Dendritic cell treated with granulocyte-macrophage colony-stimulating factor and Interleukin-4, amounts not matched to agents 40 ng/mL and 50 ng/mL, for 4 days (primary cell): ENCODE measurements at regions of chr10 and their contacts with region 1.

Region 1: DNA sequence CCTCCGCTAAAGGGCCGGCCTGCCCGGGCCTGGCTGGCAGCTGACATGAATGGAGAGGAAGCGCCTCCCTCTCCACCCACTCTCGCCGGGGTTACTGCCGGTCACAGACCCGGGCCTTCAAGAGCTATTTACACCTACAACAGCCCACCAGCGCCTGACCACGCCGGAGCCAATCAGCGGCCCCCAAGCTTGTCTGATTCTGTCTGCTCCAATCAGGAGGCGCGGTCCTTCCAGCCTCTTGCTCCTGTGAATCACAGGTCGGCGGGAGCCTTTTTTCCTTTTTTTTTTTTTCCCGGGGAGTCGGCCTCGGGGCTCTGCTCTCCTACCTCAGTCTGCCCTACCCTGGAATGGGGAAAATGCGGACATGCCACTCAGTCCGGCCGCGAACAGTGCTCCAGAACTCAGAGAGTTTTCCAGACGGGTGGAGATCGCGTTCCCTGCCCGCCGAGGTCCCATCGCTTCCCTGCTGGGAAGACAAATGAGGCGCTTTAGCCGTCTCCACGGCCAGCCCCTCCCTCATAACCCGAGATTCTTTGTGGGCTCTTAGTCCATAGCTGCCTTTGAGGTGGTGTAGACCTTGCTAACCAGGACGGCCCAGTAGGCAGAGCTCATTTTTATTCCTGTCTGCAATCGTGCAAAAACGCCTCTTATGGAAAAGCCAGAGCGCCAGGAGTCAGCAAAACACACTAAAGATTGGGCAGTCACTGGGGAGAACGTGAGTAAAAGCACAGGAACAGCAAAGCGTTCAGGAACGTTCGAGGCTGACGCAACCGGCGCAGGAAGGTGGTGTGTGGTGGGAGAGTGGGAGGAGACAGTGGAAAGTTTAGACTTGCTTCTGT is 26.5 kb downstream of the SCD start:
- H3K4me3 Mint-ChIP-seq: no peak overlapping the region
- H3K27ac Mint-ChIP-seq: no peak overlapping the region
- H3K4me1 Mint-ChIP-seq: peaks cover 45% of the 10 kb centered on the region
- H3K27me3 Mint-ChIP-seq: no peaks in the 10 kb centered on the region

Region 2: DNA sequence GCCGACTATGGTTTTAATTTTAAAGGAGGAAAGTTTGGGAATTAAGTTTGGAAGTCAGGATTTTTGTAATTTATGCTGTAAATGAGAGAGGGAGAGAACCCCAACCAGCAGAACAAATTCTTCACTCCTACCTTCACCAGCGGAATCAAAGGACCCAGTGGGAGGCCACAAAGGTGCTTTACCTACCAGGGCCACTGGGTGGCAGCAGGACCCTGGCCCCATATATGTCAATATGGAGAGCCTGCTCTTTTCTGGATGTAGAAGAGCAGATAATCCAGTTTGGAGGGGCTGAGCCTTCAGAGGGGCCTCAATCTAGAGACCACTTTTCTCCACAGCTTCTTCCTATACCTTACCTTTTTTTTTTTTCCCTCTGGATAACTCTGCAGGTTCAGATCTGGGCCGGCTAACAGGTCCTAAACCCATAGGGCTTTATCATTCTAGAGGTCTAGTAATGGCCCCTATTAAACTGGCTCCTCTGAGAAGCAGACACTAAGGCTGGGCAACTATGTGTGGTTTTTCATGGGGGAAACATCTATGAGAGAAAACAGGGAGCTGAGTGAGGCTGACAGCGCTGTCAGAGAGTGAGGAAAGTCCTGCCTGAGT is 35.0 kb before region 1 on chr10:
- intact Hi-C with region 1: loop called (anchors 5 kb)
- H3K4me3 Mint-ChIP-seq: no peak overlapping the region
- H3K27ac Mint-ChIP-seq: peak overlapping the region; percentile 84
- H3K4me1 Mint-ChIP-seq: peaks cover 48% of the 10 kb centered on the region
- H3K27me3 Mint-ChIP-seq: peaks cover 14% of the 10 kb centered on the region

Region 3: GRCh38 chr10:100346765-100347567 is 26.6 kb before region 1 on chr10 and contains the start of gene SCD:
- intact Hi-C with region 1: loop called (anchors 2 kb)
- H3K4me3 Mint-ChIP-seq: peak within 1 kb of the TSS; percentile 80
- H3K27ac Mint-ChIP-seq: peak within 1 kb of the TSS; percentile 81
- H3K4me1 Mint-ChIP-seq: peaks cover 72% of the 10 kb centered on the region
- H3K27me3 Mint-ChIP-seq: peaks cover 24% of the 10 kb centered on the region

Region 4: GRCh38 chr10:100419911-100420449 is 46.5 kb after region 1 on chr10:
- intact Hi-C with region 1: loop called (anchors 10 kb)
- H3K4me3 Mint-ChIP-seq: no peak overlapping the region
- H3K27ac Mint-ChIP-seq: no peak overlapping the region
- H3K4me1 Mint-ChIP-seq: peaks cover 14% of the 10 kb centered on the region
- H3K27me3 Mint-ChIP-seq: peaks cover 21% of the 10 kb centered on the region